Mammary epithelial cell (primary cell): ENCODE measurements at regions of chr9 and their contacts with region 1.

Region 1: GRCh38 chr9:78566948-78567684 is 270.2 kb downstream of the PSAT1 start:
- DNase-seq: peak; percentile 44
- H3K4me3 ChIP-seq: no peak overlapping the region
- H3K27ac ChIP-seq: no peak overlapping the region
- H3K4me1 ChIP-seq: no peaks in the 10 kb centered on the region
- H3K27me3 ChIP-seq: no peaks in the 10 kb centered on the region
- CTCF ChIP-seq: no peak

Region 2: GRCh38 chr9:78620764-78621163 is 53.6 kb after region 1 on chr9:
- CTCF ChIA-PET with region 1: no interaction called
- dilution Hi-C with region 1: no loop called
- in situ Hi-C with region 1: loop called in 1 of 2 experiments (anchors 10 kb)
- intact Hi-C with region 1: no loop called
- DNase-seq: peak; percentile 50
- H3K4me3 ChIP-seq: no peak overlapping the region
- H3K27ac ChIP-seq: no peak overlapping the region
- H3K4me1 ChIP-seq: no peaks in the 10 kb centered on the region
- H3K27me3 ChIP-seq: no peaks in the 10 kb centered on the region
- CTCF ChIP-seq: no peak